ENCODE measurements at regions of chr6 and their contacts with region 1.

Region 1: GRCh38 chr6:149925974-149926777 is 3.3 kb upstream of the RAET1G start:
- DNase-seq: peak; percentile 81 to 84
- ATAC-seq: peak; percentile 87 to 97
- H3K4me3 ChIP-seq: peak overlapping the region; percentile 53 to 67 (median 58)
- H3K27ac ChIP-seq: peak overlapping the region in 3 of 4 donors; percentile 7 to 53 (median 21)
- H3K4me1 ChIP-seq: peaks cover 15 to 18% of the 10 kb centered on the region in 2 donors
- H3K27me3 ChIP-seq: peaks cover 0 to 16% (median 9%) of the 10 kb centered on the region in 3 donors
- CTCF ChIP-seq: peak; percentile 92 to 98 (median 96)
- POLR2A ChIP-seq: no peak

Region 2: DNA sequence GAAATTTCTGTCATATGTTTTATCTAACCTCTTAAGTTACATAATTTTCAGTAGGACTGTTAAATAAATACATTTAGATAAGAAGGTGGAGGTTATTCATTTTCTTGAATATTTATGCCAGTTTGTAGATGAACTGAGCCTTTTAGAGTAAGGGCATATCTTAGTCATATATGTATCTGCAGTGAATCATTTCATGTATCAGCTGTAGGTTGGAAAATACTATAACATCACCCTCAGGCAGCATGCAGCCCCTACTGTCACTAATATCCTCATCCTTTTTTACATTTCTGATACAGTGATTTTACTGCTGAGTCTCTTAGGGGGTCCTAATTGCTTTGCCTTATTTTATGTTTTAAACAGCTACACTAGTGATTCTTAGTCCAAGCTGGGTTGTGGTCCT is 545.7 kb before region 1 on chr6:
- in situ Hi-C with region 1: no loop called
- intact Hi-C with region 1: no loop called
- DNase-seq: no peak
- ATAC-seq: no peak
- H3K4me3 ChIP-seq: no peak overlapping the region
- H3K27ac ChIP-seq: no peak overlapping the region
- H3K4me1 ChIP-seq: no peaks in the 10 kb centered on the region
- H3K27me3 ChIP-seq: no peaks in the 10 kb centered on the region
- CTCF ChIP-seq: no peak
- POLR2A ChIP-seq: no peak

Region 3: DNA sequence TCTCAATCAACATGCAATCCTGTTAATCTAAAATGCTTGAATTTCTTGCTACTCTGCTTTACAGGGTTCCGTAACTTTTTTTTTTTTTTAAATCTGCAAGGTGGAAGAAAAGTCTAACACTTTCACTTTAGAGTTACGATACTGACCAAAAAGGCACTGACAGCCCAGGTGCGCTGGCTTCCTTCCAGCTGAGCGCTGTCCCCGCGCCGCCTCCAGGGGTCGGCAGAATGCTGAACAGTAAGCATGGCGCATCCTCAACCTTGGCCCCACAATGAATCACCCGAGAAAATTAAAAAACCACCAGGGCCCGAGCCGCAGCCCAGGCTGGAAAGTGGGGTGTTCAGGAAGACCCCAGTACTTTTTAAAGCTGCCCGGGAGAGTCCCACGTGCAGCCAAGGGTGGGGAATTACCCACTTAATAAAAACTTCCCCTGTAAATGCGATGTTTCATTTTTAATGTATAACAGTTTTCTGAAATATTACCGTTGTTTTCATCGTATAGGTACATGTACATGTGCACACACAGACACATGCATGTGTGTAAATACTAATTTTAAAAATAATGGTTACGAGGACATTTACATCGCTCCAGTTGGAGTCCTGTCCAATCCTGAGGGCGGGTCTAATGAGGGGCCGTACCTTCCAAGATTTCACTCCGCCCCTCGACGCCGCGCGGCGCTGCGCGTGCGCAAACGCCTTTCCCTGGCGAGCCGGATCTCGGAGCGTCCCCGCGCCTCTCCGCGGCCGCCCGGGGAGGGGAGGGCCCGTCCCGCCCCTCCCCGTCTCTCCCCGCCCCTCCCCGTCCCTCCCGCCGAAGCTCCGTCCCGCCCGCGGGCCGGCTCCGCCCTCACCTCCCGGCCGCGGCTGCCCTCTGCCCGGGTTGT is 360.4 kb before region 1 on chr6 and contains the start of gene GINM1:
- in situ Hi-C with region 1: no loop called
- intact Hi-C with region 1: loop called (anchors 5 kb)
- DNase-seq: peak; percentile 84 to 92
- ATAC-seq: peak; percentile 90 to 93
- H3K4me3 ChIP-seq: peak within 1 kb of the TSS; percentile 90 to 97 (median 95)
- H3K27ac ChIP-seq: peak within 1 kb of the TSS; percentile 89 to 96 (median 94)
- H3K4me1 ChIP-seq: peaks cover 14 to 22% of the 10 kb centered on the region in 2 donors
- H3K27me3 ChIP-seq: no peaks in the 10 kb centered on the region
- CTCF ChIP-seq: peak; percentile 58 to 76 (median 66)
- POLR2A ChIP-seq: no peak
- total RNA-seq, gene GINM1: 28.9 to 39.4 (median 33.1) TPM

Region 4: DNA sequence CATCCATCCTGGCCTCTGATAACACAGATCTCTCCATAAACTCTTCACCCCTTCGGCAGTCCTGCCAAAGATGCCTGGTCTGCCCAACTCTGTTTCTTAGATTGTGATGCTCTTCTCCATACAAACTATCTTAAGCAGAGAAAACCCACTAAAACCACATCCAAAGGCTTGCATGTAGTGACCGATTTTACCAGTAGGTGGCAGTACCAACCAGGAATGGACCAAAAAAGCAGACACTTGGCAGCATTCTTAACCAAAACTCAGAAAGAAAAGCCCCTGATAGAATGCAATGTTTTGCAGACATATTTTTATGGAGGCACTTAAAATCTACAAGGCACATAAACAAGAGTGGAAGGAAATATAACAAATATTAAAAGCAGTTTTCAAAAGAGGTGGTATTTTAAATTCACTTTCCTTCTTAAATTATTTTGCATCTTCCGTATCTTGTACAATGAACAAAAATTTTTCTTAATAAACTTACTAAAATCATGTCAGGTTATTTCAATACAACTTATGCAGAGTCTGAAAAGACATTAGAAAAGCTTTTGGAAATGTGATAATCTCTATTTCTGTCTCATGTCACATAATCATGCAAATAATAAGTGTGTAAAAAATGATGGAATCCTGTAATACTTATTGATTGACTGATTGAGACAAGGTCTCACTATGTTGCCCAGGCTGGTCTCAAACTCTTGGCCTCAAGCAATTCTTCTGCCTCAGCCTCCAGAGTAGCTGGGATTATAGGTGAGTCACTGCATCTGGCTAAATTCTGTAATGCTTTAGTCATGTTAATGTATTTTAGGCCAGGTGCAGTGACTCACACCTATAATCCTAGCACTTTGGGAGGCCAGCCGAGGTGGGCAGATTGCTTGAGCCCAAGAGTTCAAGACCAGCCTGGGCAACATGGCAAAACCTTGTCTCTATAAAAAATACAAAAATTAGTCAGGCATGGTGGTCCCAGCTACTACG is 91.4 kb before region 1 on chr6:
- in situ Hi-C with region 1: loop called in 1 of 4 experiments (anchors 5 kb)
- intact Hi-C with region 1: loop called (anchors 1 kb)
- DNase-seq: peak in 1 of 2 donors; percentile 22
- ATAC-seq: peak in 1 of 2 donors; percentile 56
- H3K4me3 ChIP-seq: no peak overlapping the region
- H3K27ac ChIP-seq: no peak overlapping the region
- H3K4me1 ChIP-seq: peaks cover 4 to 6% of the 10 kb centered on the region in 2 donors
- H3K27me3 ChIP-seq: no peaks in the 10 kb centered on the region
- CTCF ChIP-seq: peak; percentile 84 to 96 (median 90)
- POLR2A ChIP-seq: no peak

Region 5: DNA sequence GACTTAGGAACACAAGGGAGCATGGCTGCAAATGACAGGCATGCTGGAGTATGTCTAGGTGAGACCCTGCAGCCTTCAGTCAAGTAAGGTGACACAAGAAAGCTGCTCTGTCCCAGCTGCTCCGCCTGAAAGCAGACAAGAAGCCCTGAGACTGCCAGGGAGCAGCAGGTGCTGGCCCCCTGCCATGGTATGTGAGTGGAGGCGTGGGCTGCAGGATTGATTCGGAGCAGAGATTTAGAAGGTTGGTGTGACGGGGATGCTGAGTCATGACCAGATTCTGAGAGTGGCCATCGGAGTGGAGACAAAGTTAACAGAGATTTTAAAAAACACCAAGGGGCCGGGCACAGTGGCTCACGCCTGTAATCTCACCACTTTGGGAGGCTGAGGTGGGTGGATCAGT is 79.9 kb before region 1 on chr6:
- in situ Hi-C with region 1: loop called in 3 of 4 experiments (anchors 5 to 10 kb)
- intact Hi-C with region 1: no loop called
- DNase-seq: peak; percentile 26 to 68
- ATAC-seq: peak; percentile 21 to 53
- H3K4me3 ChIP-seq: no peak overlapping the region
- H3K27ac ChIP-seq: peak overlapping the region; percentile 67 to 80 (median 74)
- H3K4me1 ChIP-seq: peaks cover 24 to 30% of the 10 kb centered on the region in 2 donors
- H3K27me3 ChIP-seq: no peaks in the 10 kb centered on the region
- CTCF ChIP-seq: no peak
- POLR2A ChIP-seq: no peak

Region 6: GRCh38 chr6:149895833-149896271 is 30.3 kb before region 1 on chr6:
- in situ Hi-C with region 1: no loop called
- intact Hi-C with region 1: loop called (anchors 1 kb)
- DNase-seq: peak; percentile 78 to 88
- ATAC-seq: peak; percentile 64 to 79
- H3K4me3 ChIP-seq: no peak overlapping the region
- H3K27ac ChIP-seq: peak overlapping the region; percentile 77 to 86 (median 85)
- H3K4me1 ChIP-seq: peaks cover 35 to 45% of the 10 kb centered on the region in 2 donors
- H3K27me3 ChIP-seq: no peaks in the 10 kb centered on the region
- CTCF ChIP-seq: no peak
- POLR2A ChIP-seq: no peak